Activated naive CD4-positive, alpha-beta T cell treated with anti-CD3 and anti-CD28 coated beads for 36 hours (primary cell): ENCODE measurements at regions of chr7 and their contacts with region 1.

Region 1: GRCh38 chr7:66844552-66845378 is 76.3 kb upstream of the TMEM248 start:
- DNase-seq: peak; percentile 99
- H3K4me3 Mint-ChIP-seq: peak overlapping the region; percentile 88
- H3K27ac Mint-ChIP-seq: peak overlapping the region; percentile 98
- H3K4me1 Mint-ChIP-seq: peaks cover 16% of the 10 kb centered on the region
- H3K27me3 Mint-ChIP-seq: peaks cover 2% of the 10 kb centered on the region

Region 2: DNA sequence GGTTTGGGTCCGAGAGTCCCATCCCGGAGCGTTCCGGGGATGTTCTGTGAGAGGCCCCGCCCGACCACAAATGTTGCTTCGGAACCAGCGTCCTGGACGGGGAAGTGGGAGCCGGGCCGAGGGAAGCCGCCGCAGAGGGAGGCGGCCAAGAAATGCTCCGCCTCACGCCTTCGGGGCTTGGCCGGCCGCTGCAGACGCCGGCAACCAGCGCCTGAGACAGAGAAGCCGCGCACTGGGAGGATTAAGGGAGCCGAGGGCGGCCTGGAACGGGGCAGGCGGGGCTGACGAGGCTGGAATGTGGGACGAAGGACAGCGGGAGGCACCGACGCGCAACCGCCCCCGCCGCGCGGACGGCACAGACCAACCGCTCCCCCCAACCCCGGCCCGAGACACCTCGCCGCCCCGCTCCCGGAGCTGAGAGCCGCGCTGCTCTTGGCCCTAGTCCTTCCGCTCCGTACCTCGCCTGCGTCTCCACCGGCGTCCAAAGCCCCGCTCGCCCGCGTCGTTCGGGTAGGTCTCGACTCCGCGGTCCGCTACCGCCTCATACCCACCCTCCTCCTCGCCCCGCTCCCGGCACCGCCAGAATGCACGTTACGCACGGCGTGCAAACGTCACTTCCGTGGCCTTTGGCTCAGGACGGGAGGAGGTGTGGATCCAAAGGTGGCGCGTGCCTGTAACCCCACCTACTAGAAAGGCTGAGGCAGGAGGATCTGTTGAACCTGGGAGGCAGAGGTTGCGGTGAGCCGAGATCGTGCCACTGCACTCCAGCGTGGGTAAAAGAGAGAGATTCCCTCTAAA is 252.8 kb before region 1 on chr7:
- CTCF ChIA-PET with region 1: no interaction called
- intact Hi-C with region 1: loop called (anchors 1 kb)
- DNase-seq: peak; percentile 96
- H3K4me3 Mint-ChIP-seq: peak overlapping the region; percentile 98
- H3K27ac Mint-ChIP-seq: peak overlapping the region; percentile 96
- H3K4me1 Mint-ChIP-seq: peaks cover 44% of the 10 kb centered on the region
- H3K27me3 Mint-ChIP-seq: no peaks in the 10 kb centered on the region

Region 3: DNA sequence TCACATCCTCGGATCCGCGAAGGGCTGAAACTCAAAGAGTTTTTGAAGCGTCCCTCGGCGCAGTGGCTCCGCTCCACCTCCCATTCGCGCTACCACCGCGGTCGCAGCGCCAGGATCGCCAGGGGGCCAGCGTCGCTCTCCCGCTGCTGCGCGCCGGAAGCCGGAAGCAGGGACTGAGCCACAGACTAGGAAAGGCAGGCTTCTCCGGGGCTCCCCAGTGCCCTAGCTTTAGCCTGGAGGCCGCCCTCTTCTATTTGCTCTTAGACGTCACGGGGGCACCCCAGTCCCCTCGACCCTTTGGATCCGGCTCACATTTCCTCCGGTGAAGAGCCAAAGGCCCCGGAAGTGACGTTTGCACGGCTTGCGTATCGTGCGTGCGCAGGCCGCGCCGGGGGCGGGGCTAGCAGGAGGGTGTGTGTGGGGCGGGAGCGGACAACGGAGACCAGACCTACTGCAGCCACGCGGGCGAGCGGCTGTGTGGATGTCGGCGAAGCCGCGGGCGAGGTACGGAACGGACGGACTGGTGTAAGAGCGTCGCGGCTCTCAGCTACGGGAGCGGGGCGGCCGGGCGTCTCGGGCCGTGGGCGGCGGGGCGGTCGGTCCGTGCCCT is 190.5 kb before region 1 on chr7:
- CTCF ChIA-PET with region 1: no interaction called
- intact Hi-C with region 1: loop called (anchors 1 kb)
- DNase-seq: peak; percentile 98
- H3K4me3 Mint-ChIP-seq: peak overlapping the region; percentile 95
- H3K27ac Mint-ChIP-seq: peak overlapping the region; percentile 95
- H3K4me1 Mint-ChIP-seq: peaks cover 30% of the 10 kb centered on the region
- H3K27me3 Mint-ChIP-seq: no peaks in the 10 kb centered on the region

Region 4: GRCh38 chr7:66740302-66740979 is 104.3 kb before region 1 on chr7 and contains the start of gene RABGEF1:
- CTCF ChIA-PET with region 1: no interaction called
- intact Hi-C with region 1: loop called (anchors 1 kb)
- DNase-seq: peak; percentile 97
- H3K4me3 Mint-ChIP-seq: peak within 1 kb of the TSS; percentile 92
- H3K27ac Mint-ChIP-seq: peak within 1 kb of the TSS; percentile 92
- H3K4me1 Mint-ChIP-seq: peaks cover 47% of the 10 kb centered on the region
- H3K27me3 Mint-ChIP-seq: no peaks in the 10 kb centered on the region
- total RNA-seq, gene RABGEF1: 10.7 to 10.8 TPM

Region 5: DNA sequence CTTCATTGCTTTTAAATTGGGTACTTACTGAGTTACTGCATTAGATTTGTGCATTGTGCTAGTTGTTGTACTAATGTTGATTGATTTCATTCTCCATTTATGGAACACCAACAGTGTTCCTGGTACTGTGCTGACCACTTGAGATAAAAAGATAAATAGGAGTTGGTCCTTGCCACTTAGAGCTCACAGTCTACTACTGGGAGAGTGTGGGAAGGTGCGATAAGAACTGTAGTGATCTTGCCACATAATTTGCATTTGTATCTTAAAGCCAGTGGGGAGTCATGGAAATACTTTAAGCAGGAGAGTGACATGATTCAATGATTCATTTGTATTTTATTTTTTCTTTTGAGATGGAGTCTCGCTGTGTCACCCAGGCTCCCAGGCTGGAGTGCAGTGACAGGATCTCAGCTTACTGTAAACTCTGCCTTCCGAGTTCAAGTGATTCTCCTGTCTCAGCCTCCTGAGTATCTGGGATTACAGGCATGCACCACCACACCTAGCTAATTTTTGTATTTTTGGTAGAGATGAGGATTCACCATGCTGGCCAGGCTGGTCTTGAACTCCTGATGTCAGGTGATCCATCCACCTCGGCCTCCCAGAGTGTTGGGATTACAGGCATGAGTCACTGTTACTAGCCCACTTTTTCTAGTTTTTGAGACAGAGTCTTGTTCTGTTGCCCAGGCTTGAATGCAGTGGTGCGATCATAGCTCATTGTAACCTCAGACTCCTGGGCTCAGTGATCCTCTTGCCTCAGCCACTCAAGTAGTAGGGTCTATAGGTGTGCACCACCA is 25.1 kb after region 1 on chr7:
- CTCF ChIA-PET with region 1: no interaction called
- intact Hi-C with region 1: no loop called
- DNase-seq: no peak
- H3K4me3 Mint-ChIP-seq: no peak overlapping the region
- H3K27ac Mint-ChIP-seq: no peak overlapping the region
- H3K4me1 Mint-ChIP-seq: peaks cover 6% of the 10 kb centered on the region
- H3K27me3 Mint-ChIP-seq: no peaks in the 10 kb centered on the region

Region 6: GRCh38 chr7:66886152-66886551 is 41.4 kb after region 1 on chr7:
- CTCF ChIA-PET with region 1: no interaction called
- intact Hi-C with region 1: loop called (anchors 1 kb)
- DNase-seq: no peak
- H3K4me3 Mint-ChIP-seq: no peak overlapping the region
- H3K27ac Mint-ChIP-seq: no peak overlapping the region
- H3K4me1 Mint-ChIP-seq: peaks cover 27% of the 10 kb centered on the region
- H3K27me3 Mint-ChIP-seq: no peaks in the 10 kb centered on the region

Region 7: GRCh38 chr7:67302113-67303039 is 457.6 kb after region 1 on chr7:
- CTCF ChIA-PET with region 1: no interaction called
- intact Hi-C with region 1: loop called (anchors 1 kb)
- DNase-seq: peak; percentile 100
- H3K4me3 Mint-ChIP-seq: peak overlapping the region; percentile 89
- H3K27ac Mint-ChIP-seq: peak overlapping the region; percentile 92
- H3K4me1 Mint-ChIP-seq: peaks cover 26% of the 10 kb centered on the region
- H3K27me3 Mint-ChIP-seq: no peaks in the 10 kb centered on the region